ENCODE measurements at regions of chr6 and their contacts with region 1.

Region 1: DNA sequence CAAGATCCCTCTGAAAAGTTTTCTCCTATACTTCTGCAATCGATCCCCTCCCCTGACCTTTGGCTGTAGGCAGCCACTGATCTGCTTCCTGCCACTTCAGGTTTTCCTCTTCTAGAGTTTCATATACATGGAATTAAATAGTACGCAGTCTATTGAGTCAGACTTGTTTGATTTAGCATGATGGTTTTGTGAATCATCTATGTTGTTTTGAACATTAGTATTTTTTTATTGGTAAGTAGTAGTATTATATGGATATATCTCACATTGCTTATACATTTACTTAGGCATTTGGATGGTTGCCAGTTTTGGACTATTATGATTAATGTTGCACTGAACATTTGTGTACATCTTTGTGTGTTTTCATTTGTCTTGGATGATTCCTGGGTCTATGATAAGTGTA is 518.0 kb downstream of the CD109 start:
- DNase-seq: no peak
- H3K4me3 ChIP-seq: no peak overlapping the region
- H3K27ac ChIP-seq: no peak overlapping the region
- H3K4me1 ChIP-seq: no peaks in the 10 kb centered on the region
- H3K27me3 ChIP-seq: no peaks in the 10 kb centered on the region
- CTCF ChIP-seq: no peak
- POLR2A ChIP-seq: no peak

Region 2: GRCh38 chr6:73227606-73228255 is 986.3 kb before region 1 on chr6:
- CTCF ChIA-PET with region 1: no interaction called
- POLR2A ChIA-PET with region 1: no interaction called
- dilution Hi-C with region 1: no loop called
- intact Hi-C with region 1: no loop called
- DNase-seq: no peak
- H3K4me3 ChIP-seq: no peak overlapping the region
- H3K27ac ChIP-seq: no peak overlapping the region
- H3K4me1 ChIP-seq: no peaks in the 10 kb centered on the region
- H3K27me3 ChIP-seq: no peaks in the 10 kb centered on the region
- CTCF ChIP-seq: no peak
- POLR2A ChIP-seq: no peak

Region 3: GRCh38 chr6:74100719-74101287 is 113.2 kb before region 1 on chr6:
- CTCF ChIA-PET with region 1: no interaction called
- POLR2A ChIA-PET with region 1: no interaction called
- dilution Hi-C with region 1: no loop called
- intact Hi-C with region 1: loop called (anchors 10 kb)
- DNase-seq: peak; percentile 39
- H3K4me3 ChIP-seq: no peak overlapping the region
- H3K27ac ChIP-seq: no peak overlapping the region
- H3K4me1 ChIP-seq: no peaks in the 10 kb centered on the region
- H3K27me3 ChIP-seq: peaks cover 2 to 3% of the 10 kb centered on the region in 2 experiments
- CTCF ChIP-seq: no peak
- POLR2A ChIP-seq: no peak

Measured in endothelial cell of umbilical vein (primary cell).